GM12878 (cell line): ENCODE measurements at regions of chr1 and their contacts with region 1.

Region 1: GRCh38 chr1:200802865-200803512 is 64.3 kb downstream of the CAMSAP2 start:
- DNase-seq: peak; percentile 61
- ATAC-seq: peak; percentile 98
- H3K4me3 ChIP-seq: no peak overlapping the region
- H3K27ac ChIP-seq: no peak overlapping the region
- H3K4me1 ChIP-seq: no peaks in the 10 kb centered on the region
- H3K27me3 ChIP-seq: no peaks in the 10 kb centered on the region
- CTCF ChIP-seq: peak; percentile 86 to 92 (median 92)
- EP300 ChIP-seq: no peak
- POLR2A ChIP-seq: no peak
- RAD21 ChIP-seq: peak; percentile 99

Region 2: GRCh38 chr1:200415693-200416593 is 387.0 kb before region 1 on chr1:
- CTCF ChIA-PET with region 1: no interaction called
- POLR2A ChIA-PET with region 1: no interaction called
- RAD21 ChIA-PET with region 1: no interaction called
- SMC1A ChIA-PET with region 1: no interaction called
- in situ Hi-C with region 1: no loop called
- intact Hi-C with region 1: no loop called
- DNase-seq: no peak
- ATAC-seq: peak; percentile 87
- H3K4me3 ChIP-seq: peak overlapping the region; percentile 45
- H3K27ac ChIP-seq: peak overlapping the region; percentile 80
- H3K4me1 ChIP-seq: peaks cover 13% of the 10 kb centered on the region; the same call in 1 of the 2 replicates
- H3K27me3 ChIP-seq: no peaks in the 10 kb centered on the region
- CTCF ChIP-seq: no peak
- EP300 ChIP-seq: peak in 1 of 2 experiments; percentile 72; a peak in 2 of 4 replicates
- POLR2A ChIP-seq: no peak
- RAD21 ChIP-seq: no peak

Region 3: DNA sequence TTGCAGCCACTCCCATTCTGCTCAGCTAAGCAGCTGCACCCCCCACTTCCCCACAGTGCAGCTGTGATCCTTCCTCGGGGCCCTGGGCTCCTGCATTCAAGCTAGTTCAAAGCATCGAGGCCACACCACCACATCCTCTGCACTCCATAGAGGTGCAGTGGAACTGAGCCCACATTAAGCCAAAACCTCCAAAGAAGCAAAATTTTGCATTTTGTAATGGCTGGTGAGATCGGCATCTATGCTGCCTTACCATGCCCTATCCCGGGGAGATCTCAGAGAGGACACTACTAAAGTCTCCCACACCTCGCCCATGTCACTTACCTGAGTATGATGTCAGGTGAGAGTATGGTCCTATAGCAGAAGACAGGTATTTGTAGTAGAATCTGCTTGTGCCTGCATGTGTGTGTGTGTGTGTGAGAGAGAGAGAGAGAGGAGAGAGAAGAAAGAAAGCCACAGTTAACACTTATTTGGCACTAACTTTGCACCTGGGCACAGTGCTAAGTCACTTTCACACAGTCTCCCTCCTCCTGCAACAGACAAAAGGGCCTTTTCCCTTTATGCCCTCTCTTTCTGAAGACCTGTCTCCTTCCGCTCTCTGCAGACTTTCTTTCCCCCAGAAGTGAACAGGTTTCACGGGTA is 272.2 kb before region 1 on chr1:
- CTCF ChIA-PET with region 1: interaction called, 11 read pairs
- POLR2A ChIA-PET with region 1: no interaction called
- RAD21 ChIA-PET with region 1: no interaction called
- SMC1A ChIA-PET with region 1: interaction called, 4 read pairs
- in situ Hi-C with region 1: no loop called
- intact Hi-C with region 1: no loop called
- DNase-seq: no peak
- ATAC-seq: peak; percentile 21; the same call in 2 of the 3 replicates
- H3K4me3 ChIP-seq: no peak overlapping the region
- H3K27ac ChIP-seq: no peak overlapping the region
- H3K4me1 ChIP-seq: peaks cover 11% of the 10 kb centered on the region
- H3K27me3 ChIP-seq: no peaks in the 10 kb centered on the region
- CTCF ChIP-seq: no peak
- EP300 ChIP-seq: no peak
- POLR2A ChIP-seq: no peak
- RAD21 ChIP-seq: no peak

Region 4: DNA sequence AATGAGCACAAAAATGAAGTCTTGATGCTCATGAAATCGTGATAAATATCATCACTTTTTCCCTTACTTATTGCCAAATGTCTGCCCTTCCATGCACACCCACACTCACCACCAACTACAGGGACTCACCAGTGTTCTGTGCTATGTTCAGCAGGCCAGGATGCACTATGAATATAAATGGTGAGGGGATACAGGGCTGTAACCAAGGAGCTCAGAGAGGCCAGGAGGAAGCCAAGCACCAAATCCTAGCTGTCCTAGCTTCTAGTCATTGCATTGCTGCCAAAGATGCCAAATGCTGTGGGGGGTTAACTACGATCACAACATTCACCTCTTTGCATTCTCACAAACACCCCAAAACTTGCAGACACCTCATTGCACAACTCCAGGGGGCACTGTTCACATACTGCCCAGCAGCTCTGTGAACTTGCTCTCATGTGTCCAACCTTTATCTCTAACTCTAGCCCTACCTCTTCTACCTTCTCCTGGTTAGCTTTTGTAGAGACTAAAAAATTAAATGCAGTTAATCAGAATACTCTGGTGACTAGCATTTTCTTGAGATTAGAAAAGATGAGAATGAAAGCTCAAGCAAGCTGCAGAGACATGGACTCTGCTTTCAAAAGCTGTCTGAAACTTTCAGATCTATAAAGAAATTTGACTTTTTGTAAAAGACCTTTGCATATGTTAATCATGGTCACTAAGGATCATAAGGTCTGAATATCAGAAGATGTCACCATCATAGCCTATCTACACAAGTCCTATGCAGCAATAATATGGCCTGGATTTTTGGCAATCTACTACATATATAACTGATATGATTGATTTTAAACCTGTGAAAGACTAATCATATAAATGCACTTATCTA is 168.5 kb before region 1 on chr1:
- CTCF ChIA-PET with region 1: interaction called, 16 read pairs
- POLR2A ChIA-PET with region 1: no interaction called
- RAD21 ChIA-PET with region 1: interaction called, 4 read pairs
- SMC1A ChIA-PET with region 1: interaction called, 19 read pairs
- in situ Hi-C with region 1: no loop called
- intact Hi-C with region 1: no loop called
- DNase-seq: no peak
- ATAC-seq: peak; percentile 59
- H3K4me3 ChIP-seq: no peak overlapping the region
- H3K27ac ChIP-seq: 0 out of 2 replicates have a peak overlapping the region, but pooled peaks have one; percentile 15
- H3K4me1 ChIP-seq: peaks cover 9% of the 10 kb centered on the region
- H3K27me3 ChIP-seq: no peaks in the 10 kb centered on the region
- CTCF ChIP-seq: peak in 1 of 3 experiments; percentile 41; a peak in 2 of 6 replicates
- EP300 ChIP-seq: no peak
- POLR2A ChIP-seq: no peak
- RAD21 ChIP-seq: 0 out of 2 replicates have a peak, but pooled peaks have one; percentile 21

Region 5: GRCh38 chr1:200774735-200775444 is 28.1 kb before region 1 on chr1:
- CTCF ChIA-PET with region 1: interaction called, 21 read pairs
- POLR2A ChIA-PET with region 1: no interaction called
- RAD21 ChIA-PET with region 1: interaction called, 4 read pairs
- SMC1A ChIA-PET with region 1: interaction called, 4 read pairs
- in situ Hi-C with region 1: no loop called
- intact Hi-C with region 1: no loop called
- DNase-seq: no peak
- ATAC-seq: peak; percentile 86
- H3K4me3 ChIP-seq: peak overlapping the region; percentile 29; the same call in 1 of the 2 replicates
- H3K27ac ChIP-seq: peak overlapping the region; percentile 74
- H3K4me1 ChIP-seq: peaks cover 24% of the 10 kb centered on the region
- H3K27me3 ChIP-seq: no peaks in the 10 kb centered on the region
- CTCF ChIP-seq: no peak
- EP300 ChIP-seq: peak in 1 of 2 experiments; percentile 37; a peak in 1 of 4 replicates
- POLR2A ChIP-seq: no peak
- RAD21 ChIP-seq: no peak

Region 6: GRCh38 chr1:200837931-200838571 is 35.1 kb after region 1 on chr1:
- CTCF ChIA-PET with region 1: interaction called, 24 read pairs
- POLR2A ChIA-PET with region 1: no interaction called
- RAD21 ChIA-PET with region 1: interaction called, 5 read pairs
- SMC1A ChIA-PET with region 1: interaction called, 6 read pairs
- in situ Hi-C with region 1: no loop called
- intact Hi-C with region 1: no loop called
- DNase-seq: no peak
- ATAC-seq: 0 out of 3 replicates have a peak, but pooled peaks have one; percentile 42
- H3K4me3 ChIP-seq: no peak overlapping the region
- H3K27ac ChIP-seq: no peak overlapping the region
- H3K4me1 ChIP-seq: no peaks in the 10 kb centered on the region
- H3K27me3 ChIP-seq: no peaks in the 10 kb centered on the region
- CTCF ChIP-seq: peak in 1 of 3 experiments; percentile 2; a peak in 2 of 6 replicates
- EP300 ChIP-seq: no peak
- POLR2A ChIP-seq: no peak
- RAD21 ChIP-seq: peak; percentile 28; the same call in 1 of the 2 replicates